ENCODE measurements at regions of chr4 and their contacts with region 1.

Region 1: DNA sequence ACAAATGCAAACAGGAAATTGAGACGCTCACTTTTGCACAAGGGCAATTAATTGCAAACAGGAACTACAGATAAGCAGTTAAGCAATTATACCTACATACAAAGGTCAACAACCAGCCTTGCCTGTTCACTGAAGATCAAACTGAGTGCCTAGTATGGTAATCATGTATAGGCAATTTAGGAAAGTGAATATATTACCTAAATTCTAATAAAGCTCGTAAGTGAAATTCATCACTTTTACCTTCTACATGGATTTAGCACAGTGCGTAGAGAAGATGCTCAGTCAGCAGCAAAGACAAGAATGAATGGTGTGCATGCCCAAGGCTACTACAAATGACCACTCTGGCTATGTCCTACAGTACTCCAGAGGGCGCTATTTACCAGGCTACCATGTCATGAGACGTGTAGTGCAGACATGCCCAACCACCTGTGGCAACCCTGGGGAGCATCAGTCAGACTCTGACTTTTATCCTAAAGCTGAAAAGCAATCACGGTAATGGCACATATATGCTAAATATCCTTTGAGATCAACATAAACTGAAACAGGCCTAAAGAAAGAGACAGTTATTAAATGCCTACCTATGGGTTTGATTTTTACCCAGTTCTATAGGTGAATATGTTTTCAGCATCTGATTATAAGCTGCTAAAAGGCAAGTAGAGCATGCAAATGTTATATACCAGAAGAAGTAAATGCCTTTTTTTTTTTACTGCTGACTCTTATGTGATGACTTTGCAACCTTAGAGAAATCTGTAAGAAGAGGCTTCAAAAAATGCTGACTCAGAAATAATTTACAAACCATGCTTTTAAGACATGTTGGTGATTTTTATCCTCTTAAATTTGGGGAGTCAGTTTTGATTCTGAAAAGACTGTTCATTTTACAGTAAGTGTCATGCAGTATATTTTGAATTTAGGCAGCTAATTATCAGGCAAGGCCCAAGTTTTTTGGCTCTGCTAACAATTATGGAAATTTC is 178.0 kb downstream of the PPP3CA start:
- DNase-seq: no peak

Region 2: DNA sequence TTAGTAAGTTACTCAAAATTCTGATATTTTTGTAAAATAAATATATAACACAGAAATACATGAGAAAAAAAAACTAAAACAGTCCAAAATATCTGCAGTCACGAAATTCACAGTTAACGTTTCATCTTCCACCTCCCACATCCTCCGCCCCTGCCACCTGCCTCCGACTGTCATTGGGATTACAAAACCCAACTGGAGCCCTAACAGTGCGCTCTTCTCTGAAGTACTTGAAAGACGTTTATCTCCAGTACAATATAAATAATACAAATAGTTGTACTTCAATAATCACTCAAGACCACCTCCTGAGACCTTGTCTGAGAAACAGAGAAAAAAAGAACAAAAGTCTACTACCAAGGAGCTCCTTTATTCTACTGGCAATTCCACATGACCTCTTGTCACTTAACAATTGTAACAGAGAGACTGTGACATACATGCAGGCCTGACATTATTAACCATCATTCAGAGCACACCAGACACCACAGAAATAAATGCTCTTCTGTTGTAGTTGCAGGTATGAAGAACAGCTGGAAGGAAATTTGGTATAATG is 102.6 kb before region 1 on chr4:
- intact Hi-C with region 1: no loop called
- DNase-seq: no peak

Region 3: DNA sequence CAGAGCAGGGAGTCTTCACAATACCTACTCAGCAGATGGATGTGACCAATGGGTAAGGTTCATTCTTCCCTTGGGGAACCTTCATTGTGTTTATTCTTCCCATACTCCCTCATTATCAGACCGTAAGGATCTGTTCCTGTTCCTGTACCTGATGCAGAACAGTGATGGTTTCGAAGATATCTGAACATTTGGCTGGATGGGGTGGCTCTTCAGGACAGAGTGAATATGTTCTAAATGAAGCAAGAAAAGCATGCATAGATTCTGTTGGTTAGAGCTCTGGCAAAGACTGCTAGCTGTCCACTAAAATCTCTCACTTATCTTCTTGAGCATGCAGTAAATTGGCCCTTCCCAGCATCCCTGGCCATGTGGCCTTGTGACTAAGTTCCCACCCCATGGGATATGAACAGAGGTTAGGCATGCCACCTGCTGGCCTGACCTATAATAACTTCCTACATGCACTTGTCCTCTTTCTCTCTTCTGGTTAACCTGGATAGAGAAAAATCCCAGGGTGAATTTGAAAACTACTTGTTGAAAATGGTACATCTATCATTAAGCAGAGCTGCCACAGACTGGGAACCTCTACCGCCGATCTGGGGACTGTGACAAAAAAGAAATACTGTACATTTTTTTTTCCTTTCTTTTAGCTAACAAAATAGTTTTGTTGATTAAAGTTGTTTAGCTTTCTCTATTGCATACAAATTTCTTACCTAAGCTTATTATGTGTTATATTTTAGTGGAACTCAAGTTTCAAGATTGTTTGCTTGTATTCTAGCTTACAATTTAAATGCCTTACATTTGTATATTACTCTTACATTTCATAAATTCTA is 561.2 kb after region 1 on chr4:
- intact Hi-C with region 1: loop called (anchors 1 kb)
- DNase-seq: no peak